Activated CD4-positive, alpha-beta T cell treated with anti-CD3 and anti-CD28 coated beads for 36 hours (primary cell): ENCODE measurements at regions of chr7 and their contacts with region 1.

Region 1: GRCh38 chr7:100852048-100852872 is at the start of gene SLC12A9:
- DNase-seq: peak; percentile 93
- ATAC-seq: peak; percentile 98
- H3K4me3 Mint-ChIP-seq: peak within 1 kb of the TSS; percentile 87
- H3K27ac Mint-ChIP-seq: peak within 1 kb of the TSS; percentile 91
- H3K4me1 Mint-ChIP-seq: peaks cover 11% of the 10 kb centered on the region
- H3K27me3 Mint-ChIP-seq: no peaks in the 10 kb centered on the region
- total RNA-seq, gene SLC12A9: 13.6 to 15.6 TPM

Region 2: DNA sequence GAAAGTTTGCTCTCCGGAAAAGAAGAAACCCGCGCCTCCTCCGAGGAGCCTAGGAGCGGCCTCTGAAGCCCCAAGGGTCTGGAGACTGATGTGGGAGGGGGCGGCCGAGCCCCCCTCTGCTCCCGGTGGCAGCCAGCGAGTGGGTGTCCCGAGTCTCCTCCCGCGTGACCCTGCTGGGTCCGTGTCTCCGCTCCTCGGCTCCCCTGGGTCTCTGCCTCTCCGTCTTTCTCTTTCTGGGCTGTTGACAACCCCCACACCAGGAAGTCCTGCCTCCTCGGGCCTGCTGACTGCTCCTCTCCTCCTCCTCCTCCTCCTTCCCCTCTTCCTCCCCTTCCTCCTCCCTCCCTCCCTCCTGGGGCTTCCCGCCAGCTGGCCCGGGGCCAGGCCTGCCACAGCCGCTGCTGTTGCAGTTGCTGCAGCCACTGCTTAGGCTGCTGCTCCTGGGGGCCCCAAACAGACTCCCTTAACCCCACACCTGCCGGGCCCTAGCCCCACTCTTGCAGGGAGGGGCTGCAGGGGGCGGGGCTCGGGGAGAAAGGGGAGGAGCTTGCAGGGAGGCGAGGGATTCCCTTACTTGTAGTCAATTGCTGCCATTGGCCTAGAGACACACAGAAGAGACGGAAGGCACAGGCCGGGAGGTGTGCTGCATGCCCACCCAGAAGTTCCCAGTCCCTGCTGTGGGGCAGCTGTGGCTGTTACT is 373.1 kb before region 1 on chr7 and contains the start of gene TSC22D4:
- CTCF ChIA-PET with region 1: interaction called, 3 read pairs
- POLR2A ChIA-PET with region 1: no interaction called
- intact Hi-C with region 1: loop called in 1 of 2 experiments (anchors 1 kb)
- DNase-seq: peak; percentile 96
- ATAC-seq: peak; percentile 79
- H3K4me3 Mint-ChIP-seq: peak within 1 kb of the TSS; percentile 92
- H3K27ac Mint-ChIP-seq: peak within 1 kb of the TSS; percentile 94
- H3K4me1 Mint-ChIP-seq: peaks cover 41% of the 10 kb centered on the region
- H3K27me3 Mint-ChIP-seq: no peaks in the 10 kb centered on the region
- total RNA-seq, gene TSC22D4: 78.5 to 85.7 TPM

Region 3: DNA sequence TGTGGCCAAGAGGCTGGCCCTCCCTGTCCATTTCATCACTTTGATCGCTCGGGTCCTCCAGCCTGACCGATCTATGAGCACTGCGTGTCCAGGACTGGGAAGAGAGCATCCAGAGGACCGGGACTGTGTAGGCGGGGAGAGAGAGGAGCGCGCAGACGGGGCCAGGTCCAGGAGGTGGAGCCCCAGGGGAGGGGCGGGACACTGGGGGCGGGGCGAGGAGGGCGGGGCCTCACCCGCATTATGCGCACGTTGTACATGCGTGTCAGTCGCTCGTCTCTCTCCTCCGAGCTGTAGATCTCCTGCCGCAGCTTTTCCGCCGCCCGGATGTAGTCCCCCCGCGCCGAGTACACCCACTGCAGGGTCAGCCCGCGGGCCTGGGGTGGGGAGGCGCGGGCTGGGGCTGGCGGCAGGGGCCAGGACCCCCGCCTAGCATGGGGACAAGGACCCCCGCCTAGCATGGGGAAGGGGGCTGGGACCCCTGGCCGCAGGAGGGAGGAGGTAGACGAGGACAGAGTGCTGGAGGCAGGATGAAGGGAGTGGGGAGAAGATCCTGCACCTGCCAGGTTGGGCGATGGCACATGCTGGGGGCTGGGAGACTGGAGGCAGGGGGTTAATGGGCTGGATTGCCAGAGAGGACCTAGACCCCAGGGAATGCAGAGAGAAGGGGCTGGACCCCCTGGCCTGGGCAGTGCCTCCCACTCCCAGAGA is 225.6 kb before region 1 on chr7:
- CTCF ChIA-PET with region 1: interaction called, 3 read pairs
- POLR2A ChIA-PET with region 1: no interaction called
- intact Hi-C with region 1: loop called in 1 of 2 experiments (anchors 1 kb)
- DNase-seq: peak; percentile 96
- ATAC-seq: peak; percentile 99
- H3K4me3 Mint-ChIP-seq: peak overlapping the region; percentile 71
- H3K27ac Mint-ChIP-seq: peak overlapping the region; percentile 47
- H3K4me1 Mint-ChIP-seq: peaks cover 13% of the 10 kb centered on the region
- H3K27me3 Mint-ChIP-seq: no peaks in the 10 kb centered on the region

Region 4: DNA sequence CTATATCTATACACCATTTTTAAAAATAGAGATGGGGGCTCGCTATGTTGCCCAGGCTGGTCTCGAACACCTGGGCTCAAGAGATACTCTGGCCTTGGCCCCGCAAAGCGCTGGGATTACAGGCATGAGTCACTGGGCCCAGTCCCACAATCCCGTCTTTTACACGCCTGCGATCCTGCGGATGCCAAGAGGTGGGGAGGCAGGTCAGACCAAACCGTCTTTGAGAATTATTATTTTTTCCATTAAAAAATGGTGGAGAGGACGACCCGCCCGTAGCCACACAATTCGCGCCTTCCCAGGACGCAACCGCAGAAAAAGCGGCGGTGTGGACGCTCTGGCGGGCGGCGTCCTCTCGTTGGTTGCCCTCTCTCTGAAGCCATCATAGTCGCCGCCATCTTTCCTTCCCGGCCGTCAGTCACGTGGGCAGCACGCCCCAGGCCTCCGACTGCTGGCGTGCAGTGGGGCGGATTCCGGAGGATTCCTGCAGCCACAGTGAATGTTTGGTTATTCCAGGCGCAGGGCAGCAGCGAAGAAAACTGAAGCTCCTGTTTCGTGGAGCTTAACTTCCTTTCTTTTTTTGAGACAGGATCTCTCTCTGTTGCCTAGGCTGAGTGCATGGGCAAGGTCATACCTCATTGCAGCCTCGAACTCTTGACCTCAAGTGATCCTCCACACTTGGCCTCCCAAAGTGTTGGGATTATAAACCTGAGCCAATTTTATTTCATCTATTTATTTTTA is 15.0 kb before region 1 on chr7:
- CTCF ChIA-PET with region 1: interaction called, 16 read pairs
- POLR2A ChIA-PET with region 1: no interaction called
- intact Hi-C with region 1: loop called in 1 of 2 experiments (anchors 1 kb)
- DNase-seq: peak; percentile 84
- ATAC-seq: peak; percentile 97
- H3K4me3 Mint-ChIP-seq: peak overlapping the region; percentile 64
- H3K27ac Mint-ChIP-seq: peak overlapping the region; percentile 79
- H3K4me1 Mint-ChIP-seq: peaks cover 11% of the 10 kb centered on the region
- H3K27me3 Mint-ChIP-seq: no peaks in the 10 kb centered on the region

Region 5: DNA sequence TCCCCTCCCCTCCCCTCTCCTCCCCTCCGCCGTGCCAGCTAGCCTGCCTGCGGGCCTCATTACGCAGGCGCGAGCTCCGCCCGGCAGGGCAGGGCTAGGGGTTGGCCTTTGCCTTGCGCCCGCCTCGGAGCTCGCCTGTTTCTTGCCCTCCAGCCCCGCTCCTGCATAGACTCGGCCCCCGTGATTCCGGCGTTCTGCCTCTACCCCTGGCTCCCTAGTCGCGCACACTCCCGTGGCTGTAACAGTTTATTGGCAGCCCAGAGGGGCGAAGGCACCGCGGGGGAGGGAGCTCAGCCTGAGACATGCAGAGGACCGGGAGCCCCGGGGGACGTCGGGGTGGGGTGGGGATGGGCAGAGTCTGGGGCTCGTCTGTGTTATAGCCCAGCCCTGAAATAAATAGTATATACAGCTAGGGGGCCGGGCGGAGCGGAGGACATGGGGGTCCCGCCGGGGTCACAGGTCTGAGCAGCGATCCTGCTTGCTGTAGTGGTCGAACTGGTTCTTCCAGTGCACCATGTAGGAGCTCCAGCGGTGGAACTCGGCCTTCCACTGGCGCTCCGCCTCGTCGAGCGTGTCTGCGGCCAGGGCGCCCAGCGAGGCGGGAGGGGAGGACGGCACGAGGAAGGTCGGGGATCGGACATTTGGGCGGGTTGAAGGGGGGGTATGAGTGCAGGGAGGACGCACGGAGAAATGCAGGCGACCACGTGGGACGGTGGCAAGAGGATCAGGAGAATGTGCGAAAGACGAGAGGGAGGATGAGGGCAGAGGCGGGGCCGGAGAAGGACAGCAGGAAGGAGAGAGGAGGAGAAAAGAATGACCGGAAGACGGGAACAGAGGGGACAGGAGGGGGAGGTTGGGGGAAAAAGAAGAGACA is 37.7 kb after region 1 on chr7:
- CTCF ChIA-PET with region 1: interaction called, 6 read pairs
- POLR2A ChIA-PET with region 1: interaction called, 5 read pairs
- intact Hi-C with region 1: loop called (anchors 1 to 2 kb)
- DNase-seq: peak; percentile 96
- ATAC-seq: peak; percentile 95
- H3K4me3 Mint-ChIP-seq: peak overlapping the region; percentile 77
- H3K27ac Mint-ChIP-seq: no peak overlapping the region
- H3K4me1 Mint-ChIP-seq: peaks cover 38% of the 10 kb centered on the region
- H3K27me3 Mint-ChIP-seq: peaks cover 14% of the 10 kb centered on the region

Region 6: DNA sequence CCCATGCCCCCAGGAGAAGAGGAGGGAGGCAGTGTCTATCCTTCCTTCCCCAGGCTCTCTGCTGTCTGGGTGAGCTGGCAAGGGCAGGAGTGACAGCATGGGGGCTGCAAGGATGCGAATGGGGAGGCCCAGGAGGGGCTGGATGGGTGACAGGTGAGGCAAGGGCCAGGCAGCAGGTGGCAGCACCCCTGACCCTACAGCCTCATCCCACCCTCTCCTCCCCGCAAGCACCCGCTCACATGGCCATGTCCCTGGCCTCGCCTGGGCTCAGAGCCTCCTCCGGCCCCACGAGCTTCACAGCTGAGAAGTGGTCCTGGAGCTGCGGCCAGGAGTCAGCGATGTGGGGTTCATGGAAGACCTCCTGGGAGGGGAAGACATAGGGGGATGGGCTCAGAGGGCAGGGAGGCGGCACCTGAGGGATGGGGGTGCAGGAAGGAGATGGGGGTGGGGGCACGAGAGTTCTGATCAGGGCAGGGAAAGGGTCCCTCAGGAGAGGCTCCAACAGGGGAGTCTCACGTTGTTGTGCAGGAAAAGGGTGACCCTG is 359.8 kb after region 1 on chr7:
- CTCF ChIA-PET with region 1: no interaction called
- POLR2A ChIA-PET with region 1: no interaction called
- intact Hi-C with region 1: no loop called
- DNase-seq: no peak
- ATAC-seq: no peak
- H3K4me3 Mint-ChIP-seq: no peak overlapping the region
- H3K27ac Mint-ChIP-seq: no peak overlapping the region
- H3K4me1 Mint-ChIP-seq: peaks cover 12% of the 10 kb centered on the region
- H3K27me3 Mint-ChIP-seq: no peaks in the 10 kb centered on the region